HepG2 (cell line): ENCODE measurements at regions of chr22 and their contacts with region 1.

Region 1: GRCh38 chr22:49228431-49229037 is 599.1 kb downstream of the BRD1 start:
- DNase-seq: no peak
- ATAC-seq: no peak
- H3K4me3 ChIP-seq: no peak overlapping the region
- H3K27ac ChIP-seq: no peak overlapping the region
- H3K4me1 ChIP-seq: no peaks in the 10 kb centered on the region
- H3K27me3 ChIP-seq: peaks cover 2 to 20% of the 10 kb centered on the region in 2 experiments; a peak in 3 of 5 replicates
- CTCF ChIP-seq: no peak
- EP300 ChIP-seq: no peak
- POLR2A ChIP-seq: no peak
- RAD21 ChIP-seq: no peak

Region 2: DNA sequence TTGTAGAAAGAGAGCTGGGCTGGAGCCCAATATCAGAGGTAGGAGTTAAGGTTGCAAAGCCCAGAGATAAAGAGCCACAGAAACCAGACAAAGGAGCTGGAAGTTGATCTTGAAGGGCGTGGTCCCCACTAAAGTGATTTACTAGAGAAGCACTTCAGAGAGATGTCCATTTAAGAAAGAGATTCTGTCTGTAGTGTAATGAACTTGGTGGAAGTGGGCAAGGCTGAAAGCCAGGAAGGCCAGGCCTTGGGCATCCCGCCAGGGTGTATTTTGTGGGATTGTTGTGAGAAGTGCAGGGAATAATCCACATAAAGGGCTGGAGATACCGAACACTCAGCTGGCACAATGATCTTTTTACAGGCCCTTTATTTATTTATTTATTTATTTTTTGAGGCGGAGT is 1067.2 kb before region 1 on chr22:
- CTCF ChIA-PET with region 1: no interaction called
- POLR2A ChIA-PET with region 1: no interaction called
- in situ Hi-C with region 1: no loop called
- intact Hi-C with region 1: loop called (anchors 5 kb)
- DNase-seq: no peak
- ATAC-seq: no peak
- H3K4me3 ChIP-seq: no peak overlapping the region
- H3K27ac ChIP-seq: no peak overlapping the region
- H3K4me1 ChIP-seq: no peaks in the 10 kb centered on the region
- H3K27me3 ChIP-seq: peaks cover 1 to 4% of the 10 kb centered on the region in 2 experiments; a peak in 3 of 5 replicates
- CTCF ChIP-seq: no peak
- EP300 ChIP-seq: no peak
- POLR2A ChIP-seq: no peak
- RAD21 ChIP-seq: no peak

Region 3: GRCh38 chr22:49183826-49184216 is 44.7 kb before region 1 on chr22:
- CTCF ChIA-PET with region 1: no interaction called
- POLR2A ChIA-PET with region 1: no interaction called
- in situ Hi-C with region 1: no loop called
- intact Hi-C with region 1: no loop called
- DNase-seq: no peak
- ATAC-seq: no peak
- H3K4me3 ChIP-seq: no peak overlapping the region
- H3K27ac ChIP-seq: no peak overlapping the region
- H3K4me1 ChIP-seq: peaks cover 21% of the 10 kb centered on the region
- H3K27me3 ChIP-seq: peaks cover 1 to 10% of the 10 kb centered on the region in 2 experiments; a peak in 3 of 5 replicates
- CTCF ChIP-seq: no peak
- EP300 ChIP-seq: no peak
- POLR2A ChIP-seq: no peak
- RAD21 ChIP-seq: no peak